T-cell (primary cell): ENCODE measurements at regions of chr12 and their contacts with region 1.

Region 1: DNA sequence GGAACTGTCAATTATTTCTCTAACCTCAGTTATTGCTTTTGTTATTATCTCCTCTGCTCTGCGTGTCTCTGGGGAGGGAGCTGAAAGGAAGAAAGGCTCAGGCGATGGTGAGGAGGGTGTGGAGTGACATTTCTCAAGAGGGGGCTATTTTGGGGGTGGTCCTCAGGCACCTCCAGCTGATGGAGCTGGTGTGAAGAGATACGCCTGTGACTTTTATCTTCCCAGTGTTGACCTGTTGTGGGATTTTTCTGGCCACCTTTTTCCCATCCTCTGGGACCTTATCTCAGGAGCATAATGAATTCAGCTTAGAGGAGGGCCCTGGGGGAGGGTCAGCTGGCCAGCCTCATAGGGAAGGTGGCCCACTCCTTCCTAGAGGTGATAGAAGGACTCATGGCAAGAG is 26.4 kb downstream of the KCNA5 start:
- DNase-seq: no peak
- ATAC-seq: no peak
- H3K4me3 ChIP-seq: no peak overlapping the region
- H3K4me3 Mint-ChIP-seq: no peak overlapping the region
- H3K27ac ChIP-seq: no peak overlapping the region
- H3K27ac Mint-ChIP-seq: no peak overlapping the region
- H3K4me1 ChIP-seq: no peaks in the 10 kb centered on the region
- H3K4me1 Mint-ChIP-seq: no peaks in the 10 kb centered on the region
- H3K27me3 ChIP-seq: peaks cover 0 to 10% of the 10 kb centered on the region in 2 experiments
- H3K27me3 Mint-ChIP-seq: peaks cover 7 to 21% of the 10 kb centered on the region in 2 donors

Region 2: DNA sequence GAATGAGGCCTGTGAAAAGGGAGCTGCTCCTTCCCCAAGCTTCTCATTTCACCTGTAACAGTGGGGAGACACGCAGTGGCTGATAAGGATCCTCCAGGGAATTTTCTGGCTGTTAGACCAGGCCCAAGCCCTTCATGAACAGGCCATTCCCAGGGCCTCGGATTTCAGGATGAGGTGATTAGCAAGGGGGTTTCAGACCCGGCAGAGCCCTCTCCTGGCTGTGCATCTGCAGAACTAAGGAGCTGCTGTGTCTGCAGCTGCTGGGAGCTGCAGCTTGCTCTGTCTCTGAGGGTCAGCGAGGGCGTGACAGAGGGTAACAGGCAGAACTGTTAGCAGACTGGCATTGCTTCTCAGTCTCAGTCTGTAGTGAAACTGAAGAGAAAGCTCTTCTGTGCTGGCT is 84.0 kb after region 1 on chr12:
- CTCF ChIA-PET with region 1: interaction called in 1 of 2 experiments, 11 read pairs
- POLR2A ChIA-PET with region 1: no interaction called
- DNase-seq: no peak
- ATAC-seq: no peak
- H3K4me3 ChIP-seq: no peak overlapping the region
- H3K4me3 Mint-ChIP-seq: no peak overlapping the region
- H3K27ac ChIP-seq: no peak overlapping the region
- H3K27ac Mint-ChIP-seq: no peak overlapping the region
- H3K4me1 ChIP-seq: no peaks in the 10 kb centered on the region
- H3K4me1 Mint-ChIP-seq: no peaks in the 10 kb centered on the region
- H3K27me3 ChIP-seq: peaks cover 3 to 32% of the 10 kb centered on the region in 2 experiments
- H3K27me3 Mint-ChIP-seq: peaks cover 21 to 23% of the 10 kb centered on the region in 2 donors